Activated CD4-positive, alpha-beta memory T cell treated with anti-CD3 and anti-CD28 coated beads for 36 hours (primary cell): ENCODE measurements at regions of chr6 and their contacts with region 1.

Region 1: GRCh38 chr6:138161338-138162110 is at the start of gene ARFGEF3:
- DNase-seq: peak; percentile 75
- H3K4me3 Mint-ChIP-seq: peak within 1 kb of the TSS; percentile 72
- H3K27ac Mint-ChIP-seq: no peak within 1 kb of the TSS
- H3K4me1 Mint-ChIP-seq: peaks cover 14% of the 10 kb centered on the region
- H3K27me3 Mint-ChIP-seq: peaks cover 45% of the 10 kb centered on the region
- total RNA-seq, gene ARFGEF3: 0.71 to 0.85 TPM

Region 2: GRCh38 chr6:138403801-138404661 is 242.5 kb after region 1 on chr6 and contains the start of gene HEBP2:
- CTCF ChIA-PET with region 1: no interaction called
- POLR2A ChIA-PET with region 1: no interaction called
- intact Hi-C with region 1: loop called (anchors 5 kb)
- DNase-seq: peak; percentile 97
- H3K4me3 Mint-ChIP-seq: peak within 1 kb of the TSS; percentile 79
- H3K27ac Mint-ChIP-seq: peak within 1 kb of the TSS; percentile 58
- H3K4me1 Mint-ChIP-seq: peaks cover 23% of the 10 kb centered on the region
- H3K27me3 Mint-ChIP-seq: no peaks in the 10 kb centered on the region
- total RNA-seq, gene HEBP2: 49.5 to 49.6 TPM